OCI-LY7 (cell line): ENCODE measurements at regions of chr4 and their contacts with region 1.

Region 1: DNA sequence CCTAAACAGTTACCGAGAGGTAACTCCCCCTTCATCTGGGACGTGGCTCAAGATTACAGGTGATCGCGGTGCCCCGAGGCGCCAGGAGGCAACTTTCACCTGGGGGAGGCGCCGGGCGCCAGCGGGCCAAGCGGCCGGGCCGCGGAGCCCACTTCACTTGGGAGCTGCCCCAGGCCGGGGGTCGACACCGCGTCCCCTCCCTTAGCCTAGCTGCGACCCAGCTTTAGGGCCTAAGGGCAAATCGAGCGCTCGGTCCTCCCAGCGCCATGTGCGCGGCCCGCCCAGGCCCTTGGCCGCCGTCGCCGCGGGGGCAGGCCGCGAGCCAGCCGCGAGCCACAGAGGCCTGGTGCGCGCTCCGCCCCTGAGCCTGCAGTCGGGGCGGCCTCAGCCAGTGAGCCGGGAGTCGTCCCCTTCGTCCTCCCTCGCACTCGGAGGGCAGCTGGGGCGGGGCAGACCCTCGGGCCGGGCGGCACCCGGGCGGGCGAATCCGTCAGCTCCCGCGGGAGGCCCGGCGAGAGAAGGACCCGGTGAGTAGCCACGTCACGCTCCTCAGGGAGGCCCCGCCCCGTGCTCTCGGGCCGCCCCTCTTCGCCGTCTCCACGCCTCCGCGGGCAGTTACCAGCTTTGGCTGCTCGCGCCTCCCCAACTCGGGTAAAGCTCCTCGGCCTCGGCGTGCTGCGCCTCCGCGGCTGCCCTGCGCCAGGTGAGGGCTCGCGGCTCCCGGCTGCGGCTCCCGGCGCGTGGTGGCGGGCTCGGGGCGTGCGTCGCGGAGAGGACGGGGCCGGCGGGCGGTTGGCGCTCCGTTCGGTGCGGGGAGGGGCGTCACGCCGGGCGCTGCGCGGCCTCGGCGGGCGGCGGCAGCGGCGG is at the start of gene LARP1B:
- DNase-seq: peak; percentile 94
- H3K4me3 ChIP-seq: peak within 1 kb of the TSS; percentile 82
- H3K27ac ChIP-seq: peak within 1 kb of the TSS; percentile 81
- H3K4me1 ChIP-seq: peaks cover 15% of the 10 kb centered on the region
- CTCF ChIP-seq: 0 out of 2 replicates have a peak, but pooled peaks have one; percentile 13
- total RNA-seq, gene LARP1B: 16.5 and 22.1 TPM in 2 replicates

Region 2: GRCh38 chr4:127604949-127605709 is 455.8 kb before region 1 on chr4:
- CTCF ChIA-PET with region 1: no interaction called
- POLR2A ChIA-PET with region 1: no interaction called
- intact Hi-C with region 1: loop called (anchors 10 kb)
- DNase-seq: peak; percentile 30
- H3K4me3 ChIP-seq: no peak overlapping the region
- H3K27ac ChIP-seq: no peak overlapping the region
- H3K4me1 ChIP-seq: no peaks in the 10 kb centered on the region
- CTCF ChIP-seq: peak; percentile 81

Region 3: DNA sequence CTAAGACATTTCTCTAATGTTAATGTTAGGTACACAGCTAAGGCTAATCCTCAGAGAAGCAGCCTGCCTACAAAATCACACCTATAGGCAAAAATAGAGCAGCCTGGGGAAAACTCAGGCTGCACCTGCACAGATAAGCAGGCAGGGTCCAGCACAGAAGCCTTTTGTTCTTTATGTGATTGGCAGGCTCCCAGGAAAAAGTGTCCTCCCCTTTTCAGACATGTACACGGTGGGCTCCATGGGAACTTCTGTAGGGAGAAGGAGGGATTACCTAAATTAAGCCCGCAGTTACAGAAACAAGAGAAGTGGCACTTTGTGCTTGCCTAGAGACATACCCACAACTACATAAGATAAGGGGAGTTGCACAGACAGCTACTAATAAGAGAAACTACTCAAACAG is 282.8 kb before region 1 on chr4:
- CTCF ChIA-PET with region 1: no interaction called
- POLR2A ChIA-PET with region 1: no interaction called
- intact Hi-C with region 1: no loop called
- DNase-seq: no peak
- H3K4me3 ChIP-seq: no peak overlapping the region
- H3K27ac ChIP-seq: no peak overlapping the region
- H3K4me1 ChIP-seq: peaks cover 5% of the 10 kb centered on the region
- CTCF ChIP-seq: no peak

Region 4: GRCh38 chr4:127880764-127881562 is 180.0 kb before region 1 on chr4 and contains the start of gene PLK4:
- CTCF ChIA-PET with region 1: no interaction called
- POLR2A ChIA-PET with region 1: interaction called, 3 read pairs
- intact Hi-C with region 1: loop called (anchors 2 kb)
- DNase-seq: peak; percentile 97
- H3K4me3 ChIP-seq: peak within 1 kb of the TSS; percentile 72
- H3K27ac ChIP-seq: peak within 1 kb of the TSS; percentile 67
- H3K4me1 ChIP-seq: peaks cover 29% of the 10 kb centered on the region
- CTCF ChIP-seq: no peak
- total RNA-seq, gene PLK4: 74.1 and 79.3 TPM in 2 replicates

Region 5: GRCh38 chr4:128287871-128288688 is 227.1 kb after region 1 on chr4:
- CTCF ChIA-PET with region 1: no interaction called
- POLR2A ChIA-PET with region 1: interaction called, 5 read pairs
- intact Hi-C with region 1: loop called (anchors 5 kb)
- DNase-seq: peak; percentile 99
- H3K4me3 ChIP-seq: peak overlapping the region; percentile 98
- H3K27ac ChIP-seq: peak overlapping the region; percentile 72
- H3K4me1 ChIP-seq: peaks cover 25% of the 10 kb centered on the region
- CTCF ChIP-seq: no peak

Region 6: DNA sequence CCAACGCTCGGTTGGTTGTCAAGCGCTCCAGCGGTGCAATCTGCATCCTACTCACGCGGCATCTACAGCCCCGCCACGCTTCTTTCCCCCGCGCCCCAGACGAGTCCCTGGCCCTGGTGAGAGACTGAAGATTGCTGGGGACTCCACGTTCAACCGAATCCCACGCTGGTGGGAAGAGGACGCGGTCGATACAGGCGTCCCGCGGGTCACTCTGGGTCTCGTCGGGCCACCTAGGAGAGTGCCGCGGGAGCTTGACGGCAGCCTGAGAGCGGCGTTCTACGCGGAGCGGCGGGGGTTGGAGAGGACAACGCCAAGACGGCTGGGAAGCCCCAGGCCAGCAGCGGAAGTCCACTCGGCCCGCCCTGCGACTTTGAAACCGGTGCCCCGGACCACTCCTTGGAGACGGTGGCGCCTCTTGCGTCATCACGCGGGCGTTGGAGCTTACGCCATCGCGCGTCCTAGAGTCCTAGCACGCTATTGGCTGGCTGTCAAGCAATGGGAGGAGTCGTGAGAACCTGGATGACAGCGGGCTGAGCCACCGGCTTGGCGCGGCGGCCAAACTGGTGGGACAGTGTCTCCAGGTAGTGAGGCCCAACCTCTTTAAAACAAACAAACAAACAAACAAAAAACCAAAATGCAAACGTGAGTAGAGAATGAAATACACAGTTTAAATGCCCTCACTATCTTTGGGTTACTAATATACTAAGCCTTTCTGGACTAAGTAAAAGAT is 1032.4 kb after region 1 on chr4 and contains the start of gene SCLT1:
- CTCF ChIA-PET with region 1: no interaction called
- POLR2A ChIA-PET with region 1: no interaction called
- intact Hi-C with region 1: loop called (anchors 5 kb)
- DNase-seq: peak; percentile 98
- H3K4me3 ChIP-seq: peak within 1 kb of the TSS; percentile 88
- H3K27ac ChIP-seq: peak within 1 kb of the TSS; percentile 77
- H3K4me1 ChIP-seq: peaks cover 41% of the 10 kb centered on the region
- CTCF ChIP-seq: no peak
- total RNA-seq, gene SCLT1: 36.9 and 42.5 TPM in 2 replicates